Activated T-helper 1 cell treated with anti-CD3 and anti-CD28 coated beads, Interleukin-12 subunit alpha, Interleukin-12 subunit beta, Interleukin-2, Interleukin-4 antibody, amounts not matched to agents 30 ng/mL and 10 ng/mL and 1 ng/mL, durations not matched to agents 14 hours and 24 hours and 36 hours (primary cell): ENCODE measurements at regions of chr9 and their contacts with region 1.

Region 1: GRCh38 chr9:20622330-20623020 is at the start of gene MLLT3:
- DNase-seq: peak; percentile 97
- H3K4me3 Mint-ChIP-seq: peak within 1 kb of the TSS; percentile 88
- H3K27ac Mint-ChIP-seq: peak within 1 kb of the TSS; percentile 99
- H3K4me1 Mint-ChIP-seq: peaks cover 52% of the 10 kb centered on the region
- H3K27me3 Mint-ChIP-seq: no peaks in the 10 kb centered on the region
- total RNA-seq, gene MLLT3: 33.8 and 36.4 TPM in 2 replicates

Region 2: DNA sequence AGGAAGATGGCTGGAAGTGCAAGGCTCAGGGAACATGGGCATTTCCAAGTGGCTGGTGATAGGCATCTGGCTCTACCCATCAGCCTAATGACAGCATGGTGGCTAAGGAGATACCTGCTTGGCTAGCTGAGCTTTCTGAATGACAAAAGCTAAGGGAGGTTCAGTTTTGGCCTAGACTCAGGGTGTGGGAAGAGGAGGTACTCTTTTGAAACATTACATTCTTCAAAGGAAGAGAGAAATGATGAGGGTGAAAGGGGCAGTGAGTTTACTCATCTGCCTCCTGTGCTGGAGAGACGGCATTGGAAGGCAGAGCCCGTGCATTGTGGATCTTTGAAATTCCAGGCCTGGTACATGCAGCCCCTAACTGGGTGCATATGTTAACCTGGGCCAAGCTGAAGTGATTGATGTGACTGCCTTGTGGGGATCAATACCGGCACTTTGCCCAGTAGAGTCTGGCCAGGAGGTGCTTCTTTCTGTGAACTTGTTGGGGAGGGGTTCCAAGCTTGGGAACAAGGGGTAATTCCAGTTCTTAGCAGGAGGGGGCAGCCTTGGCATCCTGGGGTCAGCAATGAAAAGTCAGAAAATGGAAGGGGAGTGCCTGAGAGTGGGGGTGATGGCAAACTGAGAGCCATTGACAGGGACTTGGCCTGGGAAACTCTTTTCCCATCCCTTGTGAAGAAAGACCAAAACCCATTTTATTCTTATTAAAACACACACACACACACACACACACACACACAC is 1105.1 kb before region 1 on chr9:
- intact Hi-C with region 1: loop called (anchors 1 kb)
- DNase-seq: no peak
- H3K4me3 Mint-ChIP-seq: no peak overlapping the region
- H3K27ac Mint-ChIP-seq: no peak overlapping the region
- H3K4me1 Mint-ChIP-seq: peaks cover 27% of the 10 kb centered on the region
- H3K27me3 Mint-ChIP-seq: peaks cover under 1% of the 10 kb centered on the region

Region 3: DNA sequence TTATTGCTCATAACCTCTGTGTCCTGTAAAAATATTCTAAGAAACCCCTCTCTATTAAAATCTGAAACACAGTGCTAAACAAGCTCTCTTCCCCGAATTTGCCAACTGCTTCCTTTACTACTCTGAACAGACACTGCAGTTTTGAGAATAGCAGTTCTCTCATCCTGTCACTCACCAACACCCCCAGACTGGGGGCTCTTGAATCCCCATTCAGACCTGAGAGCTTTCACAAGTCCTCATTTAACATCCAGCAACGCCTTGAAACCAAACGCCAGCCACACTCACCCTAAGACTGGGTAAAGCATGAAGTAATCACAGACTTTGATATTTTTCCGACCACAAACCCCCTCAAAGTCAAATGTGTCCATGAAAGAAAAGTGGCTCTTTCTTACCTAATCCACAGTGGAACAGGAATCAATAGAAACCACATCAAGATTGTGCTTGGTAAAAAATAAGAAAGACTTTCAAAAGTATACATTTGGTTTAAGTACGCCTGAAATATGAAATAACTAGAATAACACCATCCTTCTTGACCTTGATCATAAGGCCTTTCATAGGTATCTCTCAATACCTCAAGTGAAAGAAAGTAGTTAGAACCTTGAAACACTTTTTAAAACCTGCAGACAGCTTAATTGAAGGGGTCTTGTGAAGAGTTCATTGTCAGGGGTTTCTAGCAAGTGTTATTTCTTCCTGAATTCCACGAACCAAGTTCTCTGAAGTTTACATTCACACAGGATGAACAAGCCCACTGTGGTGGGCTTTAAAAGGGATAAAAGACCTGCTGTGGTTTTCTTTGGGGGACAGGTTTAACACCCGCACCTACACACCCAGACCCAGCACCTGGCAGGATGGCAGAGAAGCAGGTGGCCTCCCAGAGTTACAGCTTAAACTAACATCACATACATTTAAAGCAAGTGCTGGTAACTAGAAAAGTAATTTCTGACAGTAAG is 412.8 kb before region 1 on chr9:
- intact Hi-C with region 1: loop called (anchors 1 kb)
- DNase-seq: peak; percentile 62
- H3K4me3 Mint-ChIP-seq: peak overlapping the region; percentile 25
- H3K27ac Mint-ChIP-seq: peak overlapping the region; percentile 89
- H3K4me1 Mint-ChIP-seq: peaks cover 39% of the 10 kb centered on the region
- H3K27me3 Mint-ChIP-seq: no peaks in the 10 kb centered on the region

Region 4: DNA sequence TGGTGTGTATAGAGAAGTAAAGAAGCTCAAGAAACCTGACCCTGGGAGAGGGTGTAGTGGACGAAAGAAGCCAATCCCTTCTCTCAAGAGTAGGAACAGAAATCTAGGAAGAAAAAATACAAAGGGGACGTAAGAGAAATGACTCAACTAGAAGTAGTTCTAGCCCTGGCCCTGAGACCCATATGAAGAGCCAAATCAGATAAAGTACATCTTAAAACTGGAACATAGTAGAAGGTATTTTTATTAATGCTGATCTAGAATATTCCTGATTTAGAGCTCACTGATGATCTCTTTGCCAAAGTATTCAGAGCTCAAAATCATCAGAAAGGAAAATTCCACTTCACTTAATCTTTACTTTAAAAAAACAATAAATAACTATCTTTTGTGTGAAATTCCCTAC is 185.0 kb before region 1 on chr9:
- intact Hi-C with region 1: loop called (anchors 2 kb)
- DNase-seq: no peak
- H3K4me3 Mint-ChIP-seq: no peak overlapping the region
- H3K27ac Mint-ChIP-seq: no peak overlapping the region
- H3K4me1 Mint-ChIP-seq: peaks cover 30% of the 10 kb centered on the region
- H3K27me3 Mint-ChIP-seq: no peaks in the 10 kb centered on the region

Region 5: GRCh38 chr9:20490246-20490834 is 132.1 kb before region 1 on chr9:
- intact Hi-C with region 1: no loop called
- DNase-seq: no peak
- H3K4me3 Mint-ChIP-seq: no peak overlapping the region
- H3K27ac Mint-ChIP-seq: no peak overlapping the region
- H3K4me1 Mint-ChIP-seq: peaks cover 19% of the 10 kb centered on the region
- H3K27me3 Mint-ChIP-seq: no peaks in the 10 kb centered on the region

Region 6: GRCh38 chr9:20570756-20571155 is 51.7 kb before region 1 on chr9:
- intact Hi-C with region 1: no loop called
- DNase-seq: no peak
- H3K4me3 Mint-ChIP-seq: no peak overlapping the region
- H3K27ac Mint-ChIP-seq: peak overlapping the region; percentile 22
- H3K4me1 Mint-ChIP-seq: peaks cover 81% of the 10 kb centered on the region
- H3K27me3 Mint-ChIP-seq: no peaks in the 10 kb centered on the region

Region 7: DNA sequence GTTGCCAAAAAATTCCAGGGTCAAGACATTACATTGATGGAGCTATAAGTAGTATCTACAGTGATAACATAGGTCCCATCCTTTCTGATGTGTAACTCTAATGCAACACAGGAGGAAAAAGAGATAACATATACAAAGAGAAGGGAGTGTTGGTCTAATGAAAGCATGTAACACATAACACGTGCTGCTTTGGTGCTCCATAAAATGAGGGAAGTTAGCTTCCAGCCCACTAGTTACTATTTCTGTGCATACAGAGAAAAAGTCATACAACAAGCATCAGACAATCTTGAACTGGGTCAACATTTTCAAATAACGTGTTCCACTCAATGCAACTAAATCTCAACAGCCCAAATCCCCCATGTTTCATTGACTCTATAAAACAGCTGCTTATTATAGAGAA is 11.9 kb before region 1 on chr9:
- intact Hi-C with region 1: loop called (anchors 1 kb)
- DNase-seq: no peak
- H3K4me3 Mint-ChIP-seq: no peak overlapping the region
- H3K27ac Mint-ChIP-seq: no peak overlapping the region
- H3K4me1 Mint-ChIP-seq: peaks cover 56% of the 10 kb centered on the region
- H3K27me3 Mint-ChIP-seq: no peaks in the 10 kb centered on the region

Region 8: GRCh38 chr9:21031091-21031807 is 408.8 kb after region 1 on chr9 and contains the start of gene HACD4:
- intact Hi-C with region 1: loop called (anchors 2 kb)
- DNase-seq: peak; percentile 67
- H3K4me3 Mint-ChIP-seq: peak within 1 kb of the TSS; percentile 63
- H3K27ac Mint-ChIP-seq: peak within 1 kb of the TSS; percentile 27
- H3K4me1 Mint-ChIP-seq: peaks cover 23% of the 10 kb centered on the region
- H3K27me3 Mint-ChIP-seq: no peaks in the 10 kb centered on the region
- total RNA-seq, gene HACD4: 2.7 and 3.0 TPM in 2 replicates

Region 9: GRCh38 chr9:21060919-21061561 is 438.6 kb after region 1 on chr9:
- intact Hi-C with region 1: no loop called
- DNase-seq: peak; percentile 12
- H3K4me3 Mint-ChIP-seq: peak overlapping the region; percentile 58
- H3K27ac Mint-ChIP-seq: peak overlapping the region; percentile 13
- H3K4me1 Mint-ChIP-seq: peaks cover 24% of the 10 kb centered on the region
- H3K27me3 Mint-ChIP-seq: no peaks in the 10 kb centered on the region